Right ventricle myocardium inferior (tissue), 1 donor: ENCODE measurements at regions of chr3 and their contacts with region 1.

Region 1: DNA sequence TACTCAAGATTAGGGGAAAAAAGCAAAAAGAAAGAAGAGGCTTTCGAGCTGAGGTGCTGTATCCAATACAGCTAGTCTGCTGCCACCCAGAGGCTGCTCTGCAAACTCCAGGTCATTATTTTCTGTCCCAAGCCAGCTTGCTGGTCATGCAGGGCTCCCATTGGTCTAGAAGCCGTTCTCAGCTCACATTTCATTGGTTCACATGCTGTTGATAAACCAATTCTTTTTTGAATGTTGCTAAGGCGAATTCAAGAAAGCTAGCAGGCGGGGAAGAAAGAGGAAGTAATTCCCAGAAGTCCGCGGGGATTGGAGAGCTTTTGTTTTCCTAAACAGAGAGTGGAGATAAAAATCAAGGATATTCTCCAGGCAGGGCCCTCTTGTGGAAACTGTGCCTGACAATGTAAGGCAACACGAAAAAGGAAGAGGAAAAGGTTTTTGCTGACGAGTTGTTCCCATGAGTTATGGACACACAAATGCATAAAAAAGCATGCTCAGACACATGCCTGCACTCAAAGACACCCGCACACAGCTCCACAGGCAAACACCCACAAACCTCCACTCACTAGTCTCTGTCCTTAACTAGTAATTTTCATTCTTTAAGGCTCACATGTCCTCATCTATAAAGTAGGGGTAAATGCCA is 33.4 kb downstream of the FSTL1 start:
- DNase-seq: peak; percentile 88
- ATAC-seq: peak; percentile 61

Region 2: DNA sequence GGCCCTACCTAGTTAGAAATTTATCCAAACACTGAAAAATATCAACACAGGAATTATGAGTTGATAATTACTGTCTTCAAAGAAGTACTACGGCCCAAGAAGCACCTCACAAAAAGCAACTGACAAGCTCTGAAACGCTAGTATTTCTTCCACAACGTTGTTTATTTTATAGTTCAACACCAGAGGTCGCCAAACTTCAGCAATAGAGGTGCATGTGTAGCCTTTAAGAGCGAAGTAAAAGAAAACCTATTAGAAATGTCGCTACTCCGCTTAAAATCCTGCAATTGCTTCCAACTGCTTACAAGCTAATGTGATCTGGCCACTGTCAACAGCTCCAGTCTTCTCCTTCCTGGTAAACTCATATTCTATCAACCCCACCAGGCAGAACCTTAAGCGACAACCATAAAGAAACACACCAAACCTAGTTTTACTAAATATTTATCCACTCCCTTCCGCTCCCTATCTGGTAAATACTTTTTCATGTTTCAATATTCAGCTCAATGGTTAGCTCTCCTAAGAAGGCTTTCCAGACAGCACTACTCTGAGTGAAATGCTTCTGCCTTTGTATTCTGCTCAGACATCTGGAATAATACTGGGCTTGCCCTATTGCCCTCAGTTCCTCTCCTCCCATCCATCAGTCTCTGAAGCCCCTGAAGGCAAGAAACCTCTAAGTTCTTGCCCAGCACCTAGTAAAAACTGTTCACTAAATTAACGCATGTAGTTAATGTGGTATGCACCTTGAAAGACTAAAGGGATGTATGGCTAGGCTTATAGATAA is 525.3 kb before region 1 on chr3:
- intact Hi-C with region 1: loop called (anchors 5 kb)
- DNase-seq: no peak
- ATAC-seq: peak; percentile 85

Region 3: GRCh38 chr3:120348981-120349818 is 68.2 kb before region 1 on chr3 and contains the start of gene LRRC58:
- intact Hi-C with region 1: loop called (anchors 5 kb)
- DNase-seq: peak; percentile 97
- ATAC-seq: peak; percentile 98
- total RNA-seq, gene LRRC58: 8.7 TPM

Region 4: GRCh38 chr3:120470870-120471269 is 53.5 kb after region 1 on chr3:
- intact Hi-C with region 1: loop called (anchors 2 kb)
- DNase-seq: no peak
- ATAC-seq: peak; percentile 88

Region 5: GRCh38 chr3:120558771-120559241 is 141.4 kb after region 1 on chr3:
- intact Hi-C with region 1: loop called (anchors 1 kb)
- DNase-seq: peak; percentile 97
- ATAC-seq: peak; percentile 58

Region 6: GRCh38 chr3:120763601-120764000 is 346.2 kb after region 1 on chr3:
- intact Hi-C with region 1: no loop called
- DNase-seq: no peak
- ATAC-seq: no peak